Gastrocnemius medialis (tissue), 4 donors: ENCODE measurements at regions of chr1 and their contacts with region 1.

Region 1: DNA sequence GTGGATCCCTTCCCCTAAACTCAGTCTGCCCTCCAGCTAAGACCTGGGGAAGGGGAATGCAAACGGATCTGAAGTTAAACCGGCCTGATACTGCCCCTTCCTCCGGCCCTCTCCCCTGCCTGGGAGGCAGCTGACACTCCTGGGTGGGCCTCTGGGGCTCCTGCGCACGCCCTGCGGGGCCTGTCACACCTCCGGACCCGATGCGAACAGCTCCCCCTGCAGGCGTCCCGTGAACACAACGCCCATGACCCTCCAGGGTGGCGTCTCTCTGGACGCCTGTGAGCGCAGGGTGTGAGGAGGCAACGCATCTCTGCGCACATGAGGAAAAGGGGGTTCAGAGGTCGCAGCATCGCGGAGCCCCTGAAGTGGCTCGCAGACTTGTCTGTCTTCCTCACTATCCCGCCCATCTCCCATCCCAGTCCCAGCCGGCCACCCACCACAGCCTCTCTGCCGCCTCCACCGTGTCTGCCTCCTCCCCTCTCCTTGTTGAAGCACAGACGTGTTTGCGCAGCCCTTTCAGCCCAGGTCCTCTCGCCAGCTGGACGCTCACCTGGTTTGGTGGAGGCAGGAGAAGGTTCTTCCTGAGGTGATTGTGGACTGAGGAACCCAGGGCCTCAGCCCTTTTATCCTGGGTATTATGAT is 421 bp upstream of the LCE3A start:
- DNase-seq: no peak
- ATAC-seq: no peak
- H3K4me3 ChIP-seq: no peak overlapping the region
- H3K27ac ChIP-seq: no peak overlapping the region
- H3K4me1 ChIP-seq: no peaks in the 10 kb centered on the region
- H3K27me3 ChIP-seq: no peaks in the 10 kb centered on the region
- CTCF ChIP-seq: no peak
- POLR2A ChIP-seq: no peak

Region 2: GRCh38 chr1:152577168-152577567 is 46.2 kb before region 1 on chr1:
- in situ Hi-C with region 1: loop called in 1 of 4 experiments (anchors 10 kb)
- intact Hi-C with region 1: loop called (anchors 5 kb)
- DNase-seq: no peak
- ATAC-seq: no peak
- H3K4me3 ChIP-seq: no peak overlapping the region
- H3K27ac ChIP-seq: no peak overlapping the region
- H3K4me1 ChIP-seq: no peaks in the 10 kb centered on the region
- H3K27me3 ChIP-seq: no peaks in the 10 kb centered on the region
- CTCF ChIP-seq: no peak
- POLR2A ChIP-seq: no peak

Region 3: DNA sequence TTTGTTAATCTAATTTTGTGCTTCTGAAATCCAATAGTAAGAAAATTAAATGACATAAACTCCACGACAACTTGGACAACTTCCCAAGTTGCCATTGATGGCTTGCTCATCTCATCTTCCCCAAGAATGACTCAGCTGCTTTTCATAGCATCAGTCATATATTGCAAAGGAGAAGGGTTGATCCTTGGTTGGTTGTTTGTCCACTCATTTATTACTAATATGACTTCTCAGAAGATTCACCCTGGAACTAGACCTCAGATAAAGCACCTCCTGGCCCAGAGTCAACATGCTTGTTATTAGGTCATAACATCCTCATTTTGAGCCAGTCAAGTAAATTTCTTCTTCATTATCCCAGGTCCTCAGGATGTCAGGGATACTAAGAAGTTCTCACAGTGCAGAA is 40.7 kb before region 1 on chr1:
- in situ Hi-C with region 1: loop called in 1 of 4 experiments (anchors 10 kb)
- intact Hi-C with region 1: loop called (anchors 5 kb)
- DNase-seq: no peak
- ATAC-seq: no peak
- H3K4me3 ChIP-seq: no peak overlapping the region
- H3K27ac ChIP-seq: no peak overlapping the region
- H3K4me1 ChIP-seq: no peaks in the 10 kb centered on the region
- H3K27me3 ChIP-seq: no peaks in the 10 kb centered on the region
- CTCF ChIP-seq: no peak
- POLR2A ChIP-seq: no peak

Region 4: GRCh38 chr1:152679459-152679858 is 56.1 kb after region 1 on chr1:
- in situ Hi-C with region 1: no loop called
- intact Hi-C with region 1: no loop called
- DNase-seq: no peak
- ATAC-seq: no peak
- H3K4me3 ChIP-seq: no peak overlapping the region
- H3K27ac ChIP-seq: no peak overlapping the region
- H3K4me1 ChIP-seq: no peaks in the 10 kb centered on the region
- H3K27me3 ChIP-seq: no peaks in the 10 kb centered on the region
- CTCF ChIP-seq: no peak
- POLR2A ChIP-seq: no peak

Region 5: DNA sequence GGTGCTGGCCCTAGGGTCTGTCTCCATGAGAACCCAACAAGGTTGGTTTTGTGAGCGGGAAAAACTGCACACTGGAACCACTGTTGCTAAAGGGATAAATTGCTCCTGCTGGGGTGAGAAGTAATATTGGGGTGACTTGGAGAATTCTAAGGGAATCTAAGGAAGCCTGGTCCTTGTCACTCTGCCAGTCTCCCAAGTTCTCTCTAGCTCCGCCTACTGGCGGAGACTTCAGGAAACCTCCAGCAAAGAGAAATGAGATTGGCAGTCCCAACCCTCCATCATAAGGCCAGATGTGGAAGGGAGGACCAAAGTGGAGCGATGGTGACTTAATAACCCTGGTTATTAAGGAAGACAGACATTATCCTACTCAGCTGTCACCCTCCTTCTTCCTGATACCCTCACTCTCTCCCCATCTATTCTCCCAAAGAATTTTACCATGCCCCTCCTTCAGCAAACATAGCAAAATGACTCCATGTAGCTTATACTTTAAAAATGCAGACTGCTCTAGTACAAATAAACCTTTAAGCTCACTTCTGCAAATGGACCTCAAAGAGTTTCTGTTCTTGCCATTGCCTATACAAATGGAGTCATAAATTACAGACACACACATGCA is 154.3 kb after region 1 on chr1:
- in situ Hi-C with region 1: no loop called
- intact Hi-C with region 1: no loop called
- DNase-seq: no peak
- ATAC-seq: no peak
- H3K4me3 ChIP-seq: no peak overlapping the region
- H3K27ac ChIP-seq: no peak overlapping the region
- H3K4me1 ChIP-seq: no peaks in the 10 kb centered on the region
- H3K27me3 ChIP-seq: no peaks in the 10 kb centered on the region
- CTCF ChIP-seq: no peak
- POLR2A ChIP-seq: no peak